Left ventricle myocardium superior (tissue), 1 donor: ENCODE measurements at regions of chr16 and their contacts with region 1.

Region 1: GRCh38 chr16:56317998-56318826 is 107.1 kb downstream of the AMFR start:
- DNase-seq: peak; percentile 90
- ATAC-seq: peak; percentile 99

Region 2: DNA sequence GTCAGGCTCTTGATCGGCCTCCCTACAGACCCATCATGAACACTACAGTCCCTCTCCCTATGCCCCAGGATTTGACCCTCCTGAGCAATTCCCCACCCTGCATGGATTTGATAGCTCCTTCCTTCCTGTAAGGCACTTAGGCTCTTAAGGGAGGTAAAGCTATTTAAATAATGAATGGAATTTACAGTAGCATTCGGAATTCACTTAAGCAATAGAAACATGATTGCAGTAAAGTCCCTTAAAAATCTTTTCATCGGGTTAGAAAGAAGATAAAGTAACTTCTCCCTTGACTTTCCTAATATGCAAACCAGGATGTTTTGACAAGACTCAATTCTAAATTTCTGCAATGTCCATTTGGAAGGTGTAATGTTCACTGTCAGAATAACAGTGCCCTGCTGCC is 372.3 kb before region 1 on chr16:
- intact Hi-C with region 1: loop called (anchors 2 kb)
- DNase-seq: no peak
- ATAC-seq: no peak

Region 3: DNA sequence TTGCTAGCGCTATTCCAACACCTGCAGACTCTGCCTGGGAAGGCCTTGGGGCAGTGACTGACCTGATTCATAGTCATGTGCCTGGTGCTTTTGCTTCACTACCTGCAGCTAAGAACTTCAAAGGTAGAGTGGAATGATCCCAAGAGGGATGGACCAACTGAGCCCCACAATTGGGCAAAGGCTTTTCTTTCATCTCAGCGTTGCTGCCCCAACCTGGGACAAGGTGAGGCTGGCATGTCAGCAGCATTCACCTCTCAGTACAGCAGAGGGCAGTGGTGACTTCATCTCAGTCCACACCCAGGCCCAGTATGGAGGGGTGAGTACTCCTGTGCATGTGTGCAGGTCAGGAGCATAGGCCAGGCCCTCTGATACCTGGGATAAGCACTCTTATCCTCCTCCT is 276.5 kb before region 1 on chr16:
- intact Hi-C with region 1: loop called (anchors 10 kb)
- DNase-seq: peak; percentile 33
- ATAC-seq: peak; percentile 92

Region 4: GRCh38 chr16:56370877-56371659 is 52.9 kb after region 1 on chr16:
- intact Hi-C with region 1: no loop called
- DNase-seq: no peak
- ATAC-seq: peak; percentile 64

Region 5: DNA sequence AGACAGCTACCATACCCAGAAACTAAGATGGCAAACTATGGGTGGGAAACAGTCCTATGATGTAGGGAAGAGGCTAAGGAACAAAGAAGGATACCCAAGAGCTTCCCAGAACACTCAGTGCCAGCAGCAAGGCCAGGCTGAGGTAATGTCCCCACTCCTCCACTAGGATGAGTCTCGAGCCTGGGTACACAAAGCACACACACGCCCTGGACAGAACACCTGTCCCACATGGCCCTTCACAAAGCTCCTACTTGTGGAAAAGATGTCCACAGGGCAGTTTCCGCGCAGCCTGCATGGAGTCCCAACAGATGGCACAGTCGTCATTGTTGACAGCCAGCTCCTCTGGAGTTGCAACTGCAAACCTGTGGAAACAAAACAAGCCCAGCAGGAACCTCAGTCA is 83.3 kb after region 1 on chr16:
- intact Hi-C with region 1: no loop called
- DNase-seq: no peak
- ATAC-seq: no peak